Breast epithelium (tissue), 4 donors: ENCODE measurements at regions of chr4 and their contacts with region 1.

Region 1: GRCh38 chr4:82050806-82051205 is 323.0 kb downstream of the HNRNPD start:
- DNase-seq: no peak
- H3K4me3 ChIP-seq: no peak overlapping the region
- H3K27ac ChIP-seq: no peak overlapping the region
- H3K4me1 ChIP-seq: no peaks in the 10 kb centered on the region
- H3K27me3 ChIP-seq: no peaks in the 10 kb centered on the region
- CTCF ChIP-seq: no peak
- POLR2A ChIP-seq: no peak

Region 2: GRCh38 chr4:80370635-80371034 is 1680.2 kb before region 1 on chr4:
- intact Hi-C with region 1: loop called (anchors 10 kb)
- DNase-seq: no peak
- H3K4me3 ChIP-seq: no peak overlapping the region
- H3K27ac ChIP-seq: no peak overlapping the region
- H3K4me1 ChIP-seq: no peaks in the 10 kb centered on the region
- H3K27me3 ChIP-seq: no peaks in the 10 kb centered on the region
- CTCF ChIP-seq: no peak
- POLR2A ChIP-seq: no peak